Gastrocnemius medialis (tissue), 4 donors: ENCODE measurements at regions of chr7 and their contacts with region 1.

Region 1: GRCh38 chr7:23273141-23273599 is 26.0 kb upstream of the MALSU1 start:
- DNase-seq: peak; percentile 78 to 90
- ATAC-seq: peak; percentile 95 to 97
- H3K4me3 ChIP-seq: peak overlapping the region; percentile 19 to 43 (median 30)
- H3K27ac ChIP-seq: peak overlapping the region; percentile 64 to 73 (median 67)
- H3K4me1 ChIP-seq: no peaks in the 10 kb centered on the region
- H3K27me3 ChIP-seq: no peaks in the 10 kb centered on the region
- CTCF ChIP-seq: peak; percentile 52 to 85 (median 81)
- POLR2A ChIP-seq: no peak

Region 2: GRCh38 chr7:22094413-22095342 is 1178.5 kb before region 1 on chr7:
- in situ Hi-C with region 1: no loop called
- intact Hi-C with region 1: no loop called
- DNase-seq: no peak
- ATAC-seq: no peak
- H3K4me3 ChIP-seq: no peak overlapping the region
- H3K27ac ChIP-seq: no peak overlapping the region
- H3K4me1 ChIP-seq: no peaks in the 10 kb centered on the region
- H3K27me3 ChIP-seq: no peaks in the 10 kb centered on the region
- CTCF ChIP-seq: no peak
- POLR2A ChIP-seq: no peak

Region 3: GRCh38 chr7:23298885-23299769 is 26.0 kb after region 1 on chr7 and contains the start of gene MALSU1:
- in situ Hi-C with region 1: no loop called
- intact Hi-C with region 1: loop called (anchors 1 kb)
- DNase-seq: peak; percentile 94 to 95
- ATAC-seq: peak; percentile 100
- H3K4me3 ChIP-seq: peak within 1 kb of the TSS; percentile 78 to 99 (median 91)
- H3K27ac ChIP-seq: peak within 1 kb of the TSS; percentile 86 to 93 (median 88)
- H3K4me1 ChIP-seq: peaks cover 25 to 34% of the 10 kb centered on the region in 2 donors
- H3K27me3 ChIP-seq: no peaks in the 10 kb centered on the region
- CTCF ChIP-seq: no peak
- POLR2A ChIP-seq: peak; percentile 83 to 90
- total RNA-seq, gene MALSU1: 83.8 to 112 (median 109) TPM

Region 4: GRCh38 chr7:23462846-23463245 is 189.7 kb after region 1 on chr7:
- in situ Hi-C with region 1: loop called (anchors 5 to 10 kb)
- intact Hi-C with region 1: loop called (anchors 1 kb)
- DNase-seq: peak in 1 of 2 donors; percentile 20
- ATAC-seq: peak; percentile 98 to 99
- H3K4me3 ChIP-seq: no peak overlapping the region
- H3K27ac ChIP-seq: no peak overlapping the region
- H3K4me1 ChIP-seq: peaks cover 0 to 8% of the 10 kb centered on the region in 2 donors
- H3K27me3 ChIP-seq: peaks cover 34 to 48% (median 39%) of the 10 kb centered on the region in 3 donors
- CTCF ChIP-seq: peak in 3 of 5 experiments; percentile 4 to 41 (median 26)
- POLR2A ChIP-seq: no peak

Region 5: GRCh38 chr7:23531794-23532489 is 258.8 kb after region 1 on chr7 and contains the start of gene TRA2A:
- in situ Hi-C with region 1: no loop called
- intact Hi-C with region 1: loop called (anchors 5 kb)
- DNase-seq: peak; percentile 95 to 96
- ATAC-seq: peak; percentile 97
- H3K4me3 ChIP-seq: peak within 1 kb of the TSS; percentile 79 to 95 (median 90)
- H3K27ac ChIP-seq: peak within 1 kb of the TSS; percentile 95 to 97 (median 97)
- H3K4me1 ChIP-seq: peaks cover 35 to 36% of the 10 kb centered on the region in 2 donors
- H3K27me3 ChIP-seq: no peaks in the 10 kb centered on the region
- CTCF ChIP-seq: peak in 1 of 5 experiments; percentile 20
- POLR2A ChIP-seq: peak; percentile 92 to 97
- total RNA-seq, gene TRA2A: 4.8 to 6.4 (median 5.7) TPM

Region 6: DNA sequence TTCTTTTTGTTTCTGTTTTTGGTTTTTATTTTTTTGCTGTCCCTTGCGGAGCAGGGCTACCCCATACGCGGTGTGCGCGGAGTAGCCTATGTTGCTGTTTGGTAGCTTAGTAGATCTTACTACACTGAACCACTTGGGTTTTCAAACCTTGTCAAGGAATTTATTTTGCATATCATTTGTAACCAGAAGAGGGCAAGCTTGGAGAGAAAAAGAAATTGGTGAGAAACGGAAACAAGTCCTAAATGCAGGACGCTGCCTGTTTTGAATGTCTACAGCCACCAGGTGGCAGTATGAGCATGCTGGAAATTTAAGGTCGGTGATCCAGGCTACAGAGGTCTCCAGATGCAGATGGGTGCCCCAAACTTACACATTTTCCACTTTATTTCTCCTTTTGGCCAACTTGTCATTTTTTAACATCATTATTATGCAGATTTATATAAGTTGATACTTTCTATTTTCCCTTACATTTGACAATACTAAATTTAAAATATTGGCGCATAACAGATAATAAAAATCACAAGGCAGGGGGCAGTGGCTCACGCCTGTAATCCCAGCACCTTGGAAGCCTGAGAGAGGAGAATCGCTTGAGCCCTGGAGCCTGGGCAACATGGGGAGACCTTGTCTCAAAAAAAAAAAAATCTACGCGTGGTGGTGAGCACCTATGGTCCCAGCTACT is 273.9 kb after region 1 on chr7:
- in situ Hi-C with region 1: no loop called
- intact Hi-C with region 1: loop called (anchors 2 kb)
- DNase-seq: peak; percentile 23 to 65
- ATAC-seq: peak; percentile 88 to 92
- H3K4me3 ChIP-seq: no peak overlapping the region
- H3K27ac ChIP-seq: no peak overlapping the region
- H3K4me1 ChIP-seq: no peaks in the 10 kb centered on the region
- H3K27me3 ChIP-seq: no peaks in the 10 kb centered on the region
- CTCF ChIP-seq: peak; percentile 74 to 93 (median 81)
- POLR2A ChIP-seq: no peak

Region 7: GRCh38 chr7:23712368-23713284 is 439.5 kb after region 1 on chr7:
- in situ Hi-C with region 1: loop called in 3 of 4 experiments (anchors 25 kb)
- intact Hi-C with region 1: loop called (anchors 10 kb)
- DNase-seq: no peak
- ATAC-seq: peak; percentile 65 to 68
- H3K4me3 ChIP-seq: no peak overlapping the region
- H3K27ac ChIP-seq: no peak overlapping the region
- H3K4me1 ChIP-seq: no peaks in the 10 kb centered on the region
- H3K27me3 ChIP-seq: no peaks in the 10 kb centered on the region
- CTCF ChIP-seq: peak; percentile 53 to 70 (median 68)
- POLR2A ChIP-seq: no peak